Tibial artery (tissue), 4 donors: ENCODE measurements at regions of chr21 and their contacts with region 1.

Region 1: GRCh38 chr21:22679207-22679606 is 1681.0 kb downstream of the NCAM2 start:
- DNase-seq: no peak
- H3K4me3 ChIP-seq: no peak overlapping the region
- H3K27ac ChIP-seq: no peak overlapping the region
- H3K4me1 ChIP-seq: no peaks in the 10 kb centered on the region
- H3K27me3 ChIP-seq: no peaks in the 10 kb centered on the region
- CTCF ChIP-seq: no peak

Region 2: DNA sequence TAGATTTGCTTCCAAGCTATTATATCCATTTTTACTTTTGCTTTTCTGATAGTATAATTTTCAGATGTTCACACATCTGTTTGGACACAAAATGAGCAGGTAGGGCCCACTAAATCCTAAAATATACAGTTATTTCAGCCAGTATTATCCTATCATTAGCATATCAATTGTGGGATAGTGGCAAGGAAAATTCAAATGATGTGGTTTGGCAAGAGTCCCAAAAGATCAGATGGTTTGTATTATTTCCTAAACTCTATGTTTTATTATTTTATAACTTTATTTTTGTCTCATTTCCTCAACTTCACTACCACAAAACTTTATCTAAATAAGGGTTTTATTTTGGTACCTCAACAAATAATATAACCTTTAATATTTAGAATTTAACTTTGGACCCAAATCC is 21.4 kb before region 1 on chr21:
- intact Hi-C with region 1: loop called (anchors 2 kb)
- DNase-seq: no peak
- H3K4me3 ChIP-seq: no peak overlapping the region
- H3K27ac ChIP-seq: no peak overlapping the region
- H3K4me1 ChIP-seq: no peaks in the 10 kb centered on the region
- H3K27me3 ChIP-seq: no peaks in the 10 kb centered on the region
- CTCF ChIP-seq: no peak

Region 3: GRCh38 chr21:22703521-22703920 is 24.3 kb after region 1 on chr21:
- intact Hi-C with region 1: no loop called
- DNase-seq: no peak
- H3K4me3 ChIP-seq: no peak overlapping the region
- H3K27ac ChIP-seq: no peak overlapping the region
- H3K4me1 ChIP-seq: no peaks in the 10 kb centered on the region
- H3K27me3 ChIP-seq: no peaks in the 10 kb centered on the region
- CTCF ChIP-seq: no peak